Spleen (tissue), 13 donors: ENCODE measurements at regions of chr1 and their contacts with region 1.

Region 1: GRCh38 chr1:21334214-21335087 is 44.2 kb upstream of the ECE1 start:
- DNase-seq: peak; percentile 96
- H3K4me3 ChIP-seq: peak overlapping the region in 7 of 8 donors; percentile 9 to 65 (median 26)
- H3K27ac ChIP-seq: peak overlapping the region; percentile 59 to 97 (median 94)
- H3K4me1 ChIP-seq: peaks cover 76 to 99% (median 95%) of the 10 kb centered on the region in 6 donors
- H3K27me3 ChIP-seq: no peaks in the 10 kb centered on the region
- CTCF ChIP-seq: peak; percentile 67 to 87 (median 75)
- POLR2A ChIP-seq: peak in 1 of 3 donors; percentile 21

Region 2: GRCh38 chr1:21261551-21262281 is 72.7 kb before region 1 on chr1:
- intact Hi-C with region 1: loop called (anchors 5 kb)
- DNase-seq: no peak
- H3K4me3 ChIP-seq: peak overlapping the region in 1 of 8 donors; percentile 30
- H3K27ac ChIP-seq: peak overlapping the region; percentile 17 to 89 (median 84)
- H3K4me1 ChIP-seq: peaks cover 16 to 59% (median 29%) of the 10 kb centered on the region in 6 donors
- H3K27me3 ChIP-seq: no peaks in the 10 kb centered on the region
- CTCF ChIP-seq: no peak
- POLR2A ChIP-seq: no peak